ENCODE measurements at regions of chr4 and their contacts with region 1.

Region 1: GRCh38 chr4:151760712-151761527 is at the start of gene GATB:
- DNase-seq: peak; percentile 82 to 97 (median 92)
- ATAC-seq: peak; percentile 98
- H3K4me3 ChIP-seq: peak within 1 kb of the TSS; percentile 73 to 82
- H3K4me3 Mint-ChIP-seq: peak within 1 kb of the TSS; percentile 97
- H3K27ac ChIP-seq: peak within 1 kb of the TSS; percentile 59 to 75
- H3K27ac Mint-ChIP-seq: peak within 1 kb of the TSS; percentile 98
- H3K4me1 ChIP-seq: peaks cover 15% of the 10 kb centered on the region
- H3K4me1 Mint-ChIP-seq: peaks cover 18% of the 10 kb centered on the region
- H3K27me3 ChIP-seq: no peaks in the 10 kb centered on the region
- H3K27me3 Mint-ChIP-seq: no peaks in the 10 kb centered on the region
- CTCF ChIP-seq: peak; percentile 51
- total RNA-seq, gene GATB: 3.3 to 5.1 TPM

Region 2: DNA sequence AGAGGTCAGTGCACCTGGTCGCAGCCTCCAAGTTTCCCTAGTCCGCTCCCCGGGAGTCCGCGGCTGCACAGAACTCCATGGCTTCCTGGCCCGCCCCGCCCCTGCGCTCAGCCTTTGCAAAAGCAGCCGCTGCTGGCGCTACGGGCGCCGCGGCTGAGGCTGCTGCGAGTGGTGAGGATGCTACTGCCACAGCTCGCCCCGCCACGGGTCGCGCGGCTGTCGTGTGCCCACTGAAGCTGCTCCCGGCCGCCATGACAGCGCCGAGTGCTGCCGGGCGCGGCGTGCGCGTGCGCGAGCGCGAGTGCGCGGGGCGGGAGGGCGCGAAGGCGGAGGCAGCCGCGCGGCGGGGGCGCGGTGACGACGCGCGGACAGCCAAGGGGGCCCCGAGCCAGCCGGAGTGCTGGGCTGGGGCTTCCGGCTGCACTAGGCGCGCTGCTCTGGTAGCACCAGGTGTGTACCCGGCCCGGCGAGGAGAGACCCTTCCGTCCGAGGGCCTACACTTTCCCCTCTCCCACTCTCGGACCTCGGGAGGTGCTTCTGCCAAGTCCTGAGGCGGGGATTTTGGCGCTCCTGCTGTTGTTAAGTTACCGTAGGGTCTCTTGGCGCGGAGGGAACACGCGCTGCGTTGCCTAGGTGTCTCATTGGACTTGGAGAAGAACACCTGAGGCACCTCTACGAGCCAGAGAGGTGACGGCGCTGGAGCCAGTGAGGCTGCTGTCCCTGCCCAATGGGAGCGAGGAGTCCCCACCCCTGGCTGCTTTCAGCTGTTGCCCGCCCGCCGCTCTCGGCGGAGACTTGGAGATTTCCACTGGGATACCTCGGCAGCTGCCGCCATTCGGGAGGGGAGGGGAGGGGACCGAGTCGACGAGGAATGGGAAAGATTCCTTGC is 745.2 kb before region 1 on chr4:
- CTCF ChIA-PET with region 1: no interaction called
- POLR2A ChIA-PET with region 1: no interaction called
- intact Hi-C with region 1: loop called in 1 of 2 experiments (anchors 2 kb)
- DNase-seq: peak; percentile 68 to 95 (median 81)
- ATAC-seq: peak; percentile 74
- H3K4me3 ChIP-seq: peak overlapping the region; percentile 89 to 96
- H3K4me3 Mint-ChIP-seq: peak overlapping the region; percentile 100
- H3K27ac ChIP-seq: peak overlapping the region; percentile 96 to 97
- H3K27ac Mint-ChIP-seq: peak overlapping the region; percentile 99
- H3K4me1 ChIP-seq: peaks cover 16% of the 10 kb centered on the region
- H3K4me1 Mint-ChIP-seq: peaks cover 33% of the 10 kb centered on the region
- H3K27me3 ChIP-seq: no peaks in the 10 kb centered on the region
- H3K27me3 Mint-ChIP-seq: no peaks in the 10 kb centered on the region
- CTCF ChIP-seq: no peak

Region 3: DNA sequence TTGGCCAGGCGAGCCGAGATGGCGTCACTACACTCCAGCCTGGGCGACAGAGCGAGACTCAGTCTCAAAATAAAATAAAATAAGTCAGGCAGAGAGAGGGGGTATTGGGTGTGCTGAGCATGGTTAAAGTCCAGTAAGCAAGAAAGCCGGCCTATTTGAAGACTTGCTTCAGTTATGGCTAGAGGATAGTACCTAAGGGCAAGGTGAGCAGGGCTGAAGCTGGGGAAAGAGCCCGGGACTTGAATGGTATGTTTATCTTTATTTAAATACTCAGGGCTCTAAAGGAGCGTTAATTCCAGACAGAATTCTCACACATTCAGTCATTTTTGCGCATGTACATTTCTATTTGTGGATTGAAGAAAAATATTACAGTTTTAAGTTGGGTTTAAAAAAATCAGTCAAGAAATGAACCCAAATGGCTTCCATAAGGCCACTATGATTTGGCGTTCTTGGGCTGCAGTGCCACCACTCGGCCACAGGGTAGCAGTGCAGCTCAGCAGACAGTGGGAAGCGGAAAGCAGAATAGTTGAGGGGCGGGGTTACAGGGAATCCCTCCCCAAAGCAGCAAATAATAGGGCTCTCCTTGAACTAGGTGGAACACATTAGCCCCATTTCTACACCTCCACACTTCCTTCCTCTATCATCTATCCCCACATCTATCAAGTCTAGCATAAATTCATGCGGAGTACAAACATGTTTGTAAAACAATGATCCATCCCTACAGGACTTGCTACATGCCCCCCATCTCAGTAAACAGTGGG is 398.3 kb before region 1 on chr4:
- CTCF ChIA-PET with region 1: no interaction called
- POLR2A ChIA-PET with region 1: no interaction called
- intact Hi-C with region 1: loop called in 1 of 2 experiments (anchors 10 kb)
- DNase-seq: peak; percentile 50 to 83 (median 72)
- ATAC-seq: peak; percentile 100
- H3K4me3 ChIP-seq: no peak overlapping the region
- H3K4me3 Mint-ChIP-seq: no peak overlapping the region
- H3K27ac ChIP-seq: no peak overlapping the region
- H3K27ac Mint-ChIP-seq: no peak overlapping the region
- H3K4me1 ChIP-seq: no peaks in the 10 kb centered on the region
- H3K4me1 Mint-ChIP-seq: peaks cover 4% of the 10 kb centered on the region
- H3K27me3 ChIP-seq: no peaks in the 10 kb centered on the region
- H3K27me3 Mint-ChIP-seq: peaks cover 4% of the 10 kb centered on the region
- CTCF ChIP-seq: peak; percentile 83

Region 4: GRCh38 chr4:152100379-152101201 is 339.7 kb after region 1 on chr4:
- CTCF ChIA-PET with region 1: interaction called, 4 read pairs
- POLR2A ChIA-PET with region 1: interaction called, 4 read pairs
- intact Hi-C with region 1: loop called (anchors 1 to 5 kb)
- DNase-seq: peak; percentile 61 to 93 (median 82)
- ATAC-seq: peak; percentile 82
- H3K4me3 ChIP-seq: peak overlapping the region; percentile 9 to 61
- H3K4me3 Mint-ChIP-seq: peak overlapping the region; percentile 85
- H3K27ac ChIP-seq: peak overlapping the region; percentile 80 to 90
- H3K27ac Mint-ChIP-seq: peak overlapping the region; percentile 99
- H3K4me1 ChIP-seq: peaks cover 96% of the 10 kb centered on the region
- H3K4me1 Mint-ChIP-seq: peaks cover 91% of the 10 kb centered on the region
- H3K27me3 ChIP-seq: no peaks in the 10 kb centered on the region
- H3K27me3 Mint-ChIP-seq: no peaks in the 10 kb centered on the region
- CTCF ChIP-seq: no peak

Region 5: DNA sequence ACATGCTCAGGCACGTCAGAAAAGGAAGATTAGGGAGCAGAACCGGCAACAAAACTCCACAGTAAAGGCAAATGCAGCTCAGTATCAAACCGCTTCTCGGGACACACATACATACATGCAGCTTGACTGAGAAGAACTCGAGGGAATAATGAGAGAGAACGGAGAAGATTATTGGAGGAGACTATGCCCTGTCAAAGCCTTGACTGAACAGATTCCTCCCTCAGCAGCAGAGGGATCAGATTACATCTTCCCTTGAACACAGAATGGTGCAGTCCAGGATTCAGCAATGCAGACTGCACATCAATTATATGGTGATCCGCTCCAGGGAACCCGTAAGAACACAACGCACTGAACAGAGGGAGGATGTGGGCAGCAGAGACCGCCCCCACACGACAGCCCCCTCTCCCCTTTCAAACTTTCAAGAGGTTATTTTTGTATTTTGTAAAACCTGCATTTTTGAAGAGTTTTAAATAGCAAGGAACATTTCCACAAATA is 591.7 kb after region 1 on chr4:
- CTCF ChIA-PET with region 1: no interaction called
- POLR2A ChIA-PET with region 1: no interaction called
- intact Hi-C with region 1: loop called in 1 of 2 experiments (anchors 1 kb)
- DNase-seq: peak in 6 of 9 experiments; percentile 1 to 62 (median 40)
- ATAC-seq: peak; percentile 89
- H3K4me3 ChIP-seq: peak overlapping the region in 1 of 2 experiments; percentile 19
- H3K4me3 Mint-ChIP-seq: peak overlapping the region; percentile 15
- H3K27ac ChIP-seq: no peak overlapping the region
- H3K27ac Mint-ChIP-seq: peak overlapping the region; percentile 11
- H3K4me1 ChIP-seq: peaks cover 14% of the 10 kb centered on the region
- H3K4me1 Mint-ChIP-seq: peaks cover 26% of the 10 kb centered on the region
- H3K27me3 ChIP-seq: no peaks in the 10 kb centered on the region
- H3K27me3 Mint-ChIP-seq: no peaks in the 10 kb centered on the region
- CTCF ChIP-seq: no peak

Region 6: GRCh38 chr4:152535903-152536544 is 775.1 kb after region 1 on chr4 and contains the start of gene FBXW7:
- CTCF ChIA-PET with region 1: no interaction called
- POLR2A ChIA-PET with region 1: no interaction called
- intact Hi-C with region 1: loop called (anchors 1 to 5 kb)
- DNase-seq: peak; percentile 99 to 100 (median 100)
- ATAC-seq: peak; percentile 77
- H3K4me3 ChIP-seq: peak within 1 kb of the TSS; percentile 79
- H3K4me3 Mint-ChIP-seq: peak within 1 kb of the TSS; percentile 87
- H3K27ac ChIP-seq: peak within 1 kb of the TSS; percentile 97 to 98
- H3K27ac Mint-ChIP-seq: peak within 1 kb of the TSS; percentile 97
- H3K4me1 ChIP-seq: peaks cover 52% of the 10 kb centered on the region
- H3K4me1 Mint-ChIP-seq: peaks cover 64% of the 10 kb centered on the region
- H3K27me3 ChIP-seq: no peaks in the 10 kb centered on the region
- H3K27me3 Mint-ChIP-seq: no peaks in the 10 kb centered on the region
- CTCF ChIP-seq: no peak
- total RNA-seq, gene FBXW7: 129 to 135 TPM

Region 7: GRCh38 chr4:153115322-153116290 is 1354.7 kb after region 1 on chr4:
- CTCF ChIA-PET with region 1: no interaction called
- POLR2A ChIA-PET with region 1: no interaction called
- intact Hi-C with region 1: loop called in 1 of 2 experiments (anchors 10 kb)
- DNase-seq: peak; percentile 41 to 92 (median 76)
- ATAC-seq: peak; percentile 52
- H3K4me3 ChIP-seq: peak overlapping the region in 1 of 2 experiments; percentile 31
- H3K4me3 Mint-ChIP-seq: no peak overlapping the region
- H3K27ac ChIP-seq: peak overlapping the region; percentile 58 to 78
- H3K27ac Mint-ChIP-seq: no peak overlapping the region
- H3K4me1 ChIP-seq: peaks cover 64% of the 10 kb centered on the region
- H3K4me1 Mint-ChIP-seq: peaks cover 9% of the 10 kb centered on the region
- H3K27me3 ChIP-seq: no peaks in the 10 kb centered on the region
- H3K27me3 Mint-ChIP-seq: no peaks in the 10 kb centered on the region
- CTCF ChIP-seq: no peak

Measured in CD8-positive, alpha-beta T cell (primary cell).